ENCODE measurements at regions of chr2 and their contacts with region 1.

Region 1: GRCh38 chr2:69724540-69725159 is 17.3 kb upstream of the ANXA4 start:
- DNase-seq: peak; percentile 77
- ATAC-seq: peak; percentile 91
- H3K4me3 ChIP-seq: peak overlapping the region; percentile 42 to 65 (median 58)
- H3K27ac ChIP-seq: no peak overlapping the region
- H3K4me1 ChIP-seq: peaks cover 30% of the 10 kb centered on the region
- H3K27me3 ChIP-seq: no peaks in the 10 kb centered on the region
- CTCF ChIP-seq: peak; percentile 99
- EP300 ChIP-seq: no peak
- POLR2A ChIP-seq: no peak
- RAD21 ChIP-seq: peak; percentile 97

Region 2: GRCh38 chr2:69893684-69894551 is 169.3 kb after region 1 on chr2 and contains the start of gene SNRNP27:
- CTCF ChIA-PET with region 1: no interaction called
- POLR2A ChIA-PET with region 1: no interaction called
- in situ Hi-C with region 1: no loop called
- intact Hi-C with region 1: loop called (anchors 5 kb)
- DNase-seq: peak; percentile 80
- ATAC-seq: peak; percentile 93
- H3K4me3 ChIP-seq: peak within 1 kb of the TSS; percentile 85 to 97 (median 90)
- H3K27ac ChIP-seq: peak within 1 kb of the TSS; percentile 60
- H3K4me1 ChIP-seq: peaks cover 24% of the 10 kb centered on the region
- H3K27me3 ChIP-seq: no peaks in the 10 kb centered on the region; a peak in 1 of 5 replicates
- CTCF ChIP-seq: no peak
- EP300 ChIP-seq: peak in 1 of 2 experiments; percentile 25; a peak in 1 of 4 replicates
- POLR2A ChIP-seq: peak; percentile 77 to 78
- RAD21 ChIP-seq: no peak
- total RNA-seq, gene SNRNP27: 54.6 and 80.8 TPM in 2 replicates